ENCODE measurements at regions of chr11 and their contacts with region 1.

Region 1: GRCh38 chr11:118607401-118608359 is at the start of gene PHLDB1:
- DNase-seq: peak; percentile 75 to 92
- ATAC-seq: peak; percentile 57
- H3K4me3 ChIP-seq: peak within 1 kb of the TSS; percentile 73 to 76
- H3K27ac ChIP-seq: peak within 1 kb of the TSS; percentile 48 to 92
- H3K4me1 ChIP-seq: peaks cover 0 to 2% of the 10 kb centered on the region in 2 donors
- H3K27me3 ChIP-seq: no peaks in the 10 kb centered on the region
- total RNA-seq, gene PHLDB1: 260 to 274 TPM

Region 2: DNA sequence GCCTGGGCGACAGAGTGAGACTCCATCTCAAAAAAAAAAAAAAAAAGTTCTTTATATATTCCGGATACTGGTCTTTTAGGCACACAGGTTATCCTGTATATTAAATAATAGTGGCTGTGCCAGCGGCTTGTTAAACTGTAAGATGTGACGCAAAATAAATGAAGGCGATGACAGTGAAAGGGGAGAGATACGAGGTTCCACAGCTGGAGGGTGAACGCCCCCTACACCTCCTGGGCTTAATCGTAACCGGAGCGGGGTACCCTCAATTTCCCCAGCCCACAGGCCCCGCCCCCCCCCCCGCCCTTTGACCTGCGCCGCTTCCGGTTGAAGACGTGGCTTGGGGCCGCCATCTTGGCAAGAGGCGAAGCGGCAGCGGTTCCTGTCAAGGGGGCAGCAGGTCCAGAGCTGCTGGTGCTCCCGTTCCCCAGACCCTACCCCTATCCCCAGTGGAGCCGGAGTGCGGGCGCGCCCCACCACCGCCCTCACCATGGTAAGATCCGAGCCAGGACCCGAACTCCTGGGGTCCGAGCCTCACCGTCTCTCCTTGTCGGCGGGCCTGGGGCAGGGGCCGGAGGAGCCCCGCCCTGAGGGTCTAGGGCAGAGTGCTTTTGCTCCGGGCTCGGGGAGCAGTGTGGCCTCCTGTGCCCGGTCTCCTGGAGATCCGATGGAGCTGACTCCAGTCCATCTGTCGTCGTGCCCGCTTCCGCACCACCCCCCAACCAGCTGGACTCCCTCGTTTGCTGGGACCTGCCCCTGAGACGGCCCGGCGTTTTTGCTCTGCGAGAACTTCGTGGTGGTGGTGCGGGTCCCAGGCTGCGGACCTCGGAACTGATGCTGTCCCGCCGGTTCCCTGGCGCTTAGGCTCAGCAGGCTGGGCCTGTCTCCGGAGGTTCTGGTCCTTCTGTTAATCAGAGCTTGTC is 35.4 kb before region 1 on chr11 and contains the start of gene ARCN1:
- intact Hi-C with region 1: loop called (anchors 5 kb)
- DNase-seq: peak; percentile 88 to 91
- ATAC-seq: peak; percentile 92
- H3K4me3 ChIP-seq: peak within 1 kb of the TSS; percentile 46 to 56
- H3K27ac ChIP-seq: peak within 1 kb of the TSS; percentile 84 to 91
- H3K4me1 ChIP-seq: no peaks in the 10 kb centered on the region
- H3K27me3 ChIP-seq: no peaks in the 10 kb centered on the region
- total RNA-seq, gene ARCN1: 128 to 170 TPM

Region 3: DNA sequence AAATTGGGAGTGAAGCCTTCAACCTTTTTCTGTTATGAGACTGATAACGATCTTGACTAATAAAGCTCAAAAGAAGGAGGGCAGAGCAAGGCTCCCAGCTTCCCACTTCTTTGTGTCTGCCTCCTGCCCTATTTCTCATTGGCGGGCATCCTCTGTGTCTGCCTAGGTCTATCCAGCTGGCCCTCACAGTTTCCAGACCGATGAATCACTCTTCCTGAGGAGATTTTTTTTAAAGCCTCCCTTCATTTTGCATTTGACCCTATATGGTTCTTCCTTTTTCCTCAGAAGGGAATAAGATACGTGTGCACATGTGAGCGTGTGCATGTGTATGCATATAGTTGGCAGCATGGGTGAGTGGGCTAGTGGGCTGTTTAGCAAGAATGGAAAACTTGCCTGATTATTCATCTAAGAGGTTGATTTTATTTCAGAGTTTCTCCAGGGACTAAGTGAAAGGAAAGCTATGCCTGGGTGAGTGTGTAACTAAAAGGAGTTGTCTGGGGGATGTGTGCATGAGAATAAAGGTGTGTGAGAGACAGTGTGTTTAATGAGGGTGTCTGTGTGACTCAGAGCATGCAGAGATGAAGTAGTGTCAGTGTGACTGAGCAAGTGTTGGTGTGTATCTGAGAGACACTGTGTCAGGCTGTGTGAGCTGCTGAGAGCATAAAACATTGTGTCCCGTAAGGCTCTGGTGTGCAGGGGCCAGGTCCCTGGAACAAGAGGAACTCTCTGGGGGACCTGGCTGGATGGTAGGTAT is 11.9 kb after region 1 on chr11:
- intact Hi-C with region 1: loop called in 1 of 2 experiments (anchors 1 kb)
- DNase-seq: peak; percentile 85 to 89
- ATAC-seq: peak; percentile 73
- H3K4me3 ChIP-seq: no peak overlapping the region
- H3K27ac ChIP-seq: peak overlapping the region; percentile 85 to 88
- H3K4me1 ChIP-seq: peaks cover 0 to 4% of the 10 kb centered on the region in 2 donors
- H3K27me3 ChIP-seq: no peaks in the 10 kb centered on the region

Region 4: DNA sequence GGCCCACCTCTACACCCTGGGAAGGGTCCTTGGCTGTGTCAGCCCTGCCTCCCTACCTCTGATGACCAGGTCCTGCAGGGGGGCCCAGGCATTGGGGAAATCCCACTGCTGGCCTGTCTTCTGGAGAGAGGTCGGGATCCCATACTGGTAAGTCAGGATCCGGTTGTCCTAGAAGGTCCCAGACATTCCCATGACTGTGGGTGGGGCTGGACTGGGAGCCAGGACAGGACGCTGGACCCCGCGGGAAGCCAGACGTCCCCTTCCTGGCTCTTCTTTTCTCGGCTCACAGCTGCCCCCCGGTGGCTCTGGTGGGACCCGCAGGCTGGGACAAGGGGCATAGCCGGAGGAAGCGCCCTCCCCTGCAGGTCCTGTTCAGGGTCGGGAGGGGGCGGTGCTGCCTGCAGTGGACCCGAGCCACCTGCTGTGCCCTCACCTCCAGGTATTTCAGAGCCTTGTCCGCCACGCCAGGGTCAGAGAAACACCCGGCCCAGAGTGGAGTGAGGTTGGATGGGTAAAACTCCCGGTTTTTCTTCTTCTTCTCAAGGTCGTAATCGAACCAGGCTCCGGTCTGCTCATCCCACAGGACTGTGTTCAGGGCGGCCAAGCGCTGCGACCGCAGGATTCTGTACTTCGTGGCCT is 51.8 kb after region 1 on chr11:
- intact Hi-C with region 1: loop called in 1 of 2 experiments (anchors 5 kb)
- DNase-seq: peak; percentile 93 to 98
- ATAC-seq: peak; percentile 91
- H3K4me3 ChIP-seq: no peak overlapping the region
- H3K27ac ChIP-seq: peak overlapping the region in 1 of 2 donors; percentile 55
- H3K4me1 ChIP-seq: no peaks in the 10 kb centered on the region
- H3K27me3 ChIP-seq: no peaks in the 10 kb centered on the region

Region 5: DNA sequence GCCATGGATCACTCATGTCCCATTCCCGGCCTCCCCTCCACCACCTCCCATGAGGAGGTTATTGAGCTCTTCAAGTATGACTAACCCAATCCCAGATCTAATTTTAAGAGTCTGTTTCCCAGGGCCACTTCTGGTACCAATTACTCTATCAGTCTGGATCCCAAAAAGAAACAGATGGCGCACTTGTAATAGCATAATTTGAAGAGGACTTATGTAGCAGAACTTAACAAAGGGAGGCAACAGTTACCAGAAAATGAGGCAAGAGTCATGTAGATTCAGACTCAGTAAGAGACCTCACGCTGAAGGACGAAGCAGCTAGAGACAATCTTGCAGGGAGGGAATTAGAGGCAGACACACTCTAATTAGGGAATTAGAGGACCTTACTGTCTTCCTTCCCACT is 136.4 kb after region 1 on chr11:
- intact Hi-C with region 1: no loop called
- DNase-seq: no peak
- ATAC-seq: no peak
- H3K4me3 ChIP-seq: no peak overlapping the region
- H3K27ac ChIP-seq: no peak overlapping the region
- H3K4me1 ChIP-seq: peaks cover 0 to 4% of the 10 kb centered on the region in 2 donors
- H3K27me3 ChIP-seq: no peaks in the 10 kb centered on the region

Measured in aorta (tissue), 5 donors.